Mammary epithelial cell (primary cell): ENCODE measurements at regions of chr4 and their contacts with region 1.

Region 1: DNA sequence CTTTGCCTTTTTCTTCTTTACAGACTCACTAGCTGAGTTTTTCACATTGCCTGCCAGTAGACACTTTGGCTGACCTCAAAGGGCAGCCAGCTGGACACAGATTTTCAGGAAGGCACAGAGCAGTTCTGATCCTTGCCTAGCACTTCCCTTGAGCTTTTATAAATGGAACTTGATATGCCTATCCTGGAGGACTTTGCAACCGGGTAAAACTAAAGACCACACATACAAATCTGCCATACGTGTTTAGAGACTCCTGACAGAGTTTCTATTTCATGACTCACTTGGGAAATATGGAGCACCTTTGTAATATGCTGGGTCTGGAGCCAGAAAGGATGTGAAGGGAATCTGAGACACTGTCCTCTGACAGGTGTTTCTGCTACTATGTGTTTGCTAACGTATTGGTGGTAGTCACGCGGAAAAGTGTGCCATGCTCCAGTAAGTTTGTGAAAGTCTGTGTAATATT is 56.7 kb upstream of the RASSF6 start:
- DNase-seq: peak; percentile 99
- H3K4me3 ChIP-seq: no peak overlapping the region
- H3K27ac ChIP-seq: peak overlapping the region; percentile 90
- H3K4me1 ChIP-seq: peaks cover 43% of the 10 kb centered on the region
- H3K27me3 ChIP-seq: no peaks in the 10 kb centered on the region
- CTCF ChIP-seq: no peak

Region 2: DNA sequence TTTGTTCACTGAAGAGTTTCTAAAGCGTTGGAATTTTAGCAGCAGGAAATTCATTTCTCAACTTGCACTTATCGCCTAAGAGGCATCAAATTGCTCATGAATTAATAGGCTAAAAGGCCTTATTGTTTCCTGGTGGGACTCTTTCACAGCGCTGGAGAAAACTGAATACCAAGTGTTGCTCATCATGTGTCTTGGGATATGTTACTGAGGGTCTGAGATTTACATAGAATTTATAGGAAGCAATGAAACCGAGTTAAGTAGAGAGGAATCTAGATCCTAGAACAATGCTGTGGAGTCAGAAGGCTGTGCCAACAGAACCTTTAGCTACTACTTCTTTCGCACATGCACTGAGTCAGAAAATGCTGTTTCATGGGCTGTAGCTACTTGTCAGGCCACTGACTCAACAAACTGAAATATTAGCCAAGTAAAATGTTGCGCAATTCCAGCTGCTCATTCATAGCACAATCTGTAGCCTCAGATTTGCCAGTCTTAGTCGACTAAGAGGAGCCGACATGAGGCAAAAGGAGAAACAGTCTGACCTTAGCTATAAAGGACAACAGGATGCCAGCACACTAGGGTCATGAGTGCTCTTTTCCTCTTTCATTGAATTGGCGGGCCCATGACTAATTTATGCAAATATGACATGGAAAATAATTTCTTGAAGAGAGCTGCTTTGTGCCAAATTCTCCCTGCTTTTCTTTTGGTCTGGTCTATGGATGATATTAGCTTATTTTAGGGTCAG is 27.6 kb after region 1 on chr4:
- CTCF ChIA-PET with region 1: no interaction called
- dilution Hi-C with region 1: loop called (anchors 5 kb)
- in situ Hi-C with region 1: no loop called
- intact Hi-C with region 1: no loop called
- DNase-seq: peak; percentile 99
- H3K4me3 ChIP-seq: peak overlapping the region in 1 of 3 experiments; percentile 11
- H3K27ac ChIP-seq: peak overlapping the region; percentile 87
- H3K4me1 ChIP-seq: peaks cover 69% of the 10 kb centered on the region
- H3K27me3 ChIP-seq: no peaks in the 10 kb centered on the region
- CTCF ChIP-seq: no peak

Region 3: GRCh38 chr4:73853246-73853704 is 176.4 kb after region 1 on chr4 and contains the start of gene PF4V1:
- CTCF ChIA-PET with region 1: no interaction called
- dilution Hi-C with region 1: loop called (anchors 25 kb)
- in situ Hi-C with region 1: loop called in 1 of 2 experiments (anchors 5 kb)
- intact Hi-C with region 1: no loop called
- DNase-seq: no peak
- H3K4me3 ChIP-seq: peak within 1 kb of the TSS in 1 of 3 experiments; percentile 11
- H3K27ac ChIP-seq: no peak within 1 kb of the TSS
- H3K4me1 ChIP-seq: peaks cover 5% of the 10 kb centered on the region
- H3K27me3 ChIP-seq: no peaks in the 10 kb centered on the region
- CTCF ChIP-seq: peak; percentile 19 to 43
- total RNA-seq, gene PF4V1: not detected